ENCODE measurements at regions of chr1 and their contacts with region 1.

Region 1: DNA sequence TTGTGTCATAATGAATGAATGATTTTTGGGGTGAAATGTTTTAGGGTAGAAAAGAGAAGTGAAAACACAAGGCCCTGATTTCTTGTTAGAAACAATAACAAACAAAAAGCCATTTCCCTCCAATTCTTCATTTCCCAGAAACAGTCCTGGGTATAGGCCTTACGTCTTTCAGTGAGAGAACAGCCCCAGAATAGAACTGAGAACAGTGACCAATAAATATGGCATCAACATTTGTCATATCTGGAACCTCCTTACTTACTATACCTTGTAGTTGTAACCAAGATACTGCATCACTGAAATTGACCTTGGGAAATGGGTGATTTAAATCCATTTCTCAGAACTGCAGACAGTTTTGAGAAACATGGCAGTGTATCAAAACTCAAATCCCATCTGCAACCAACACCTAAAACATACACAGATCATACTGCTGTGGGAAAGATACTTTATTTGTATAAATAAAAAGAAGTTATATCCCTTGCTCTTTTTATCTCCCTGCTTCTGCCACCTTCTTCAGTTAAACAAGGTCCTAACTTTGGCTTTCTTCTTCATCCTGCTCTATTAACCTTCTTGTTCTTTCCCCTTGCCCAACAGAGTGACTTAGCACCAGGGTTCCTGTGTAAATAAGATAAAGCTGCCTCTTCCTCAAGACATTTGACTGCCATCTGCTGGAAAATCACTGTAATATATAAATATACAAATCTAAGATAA is 19.5 kb downstream of the XKR8 start:
- DNase-seq: peak in 7 of 9 donors; percentile 24 to 66 (median 53)
- ATAC-seq: peak; percentile 80
- H3K4me3 ChIP-seq: no peak overlapping the region
- H3K4me3 Mint-ChIP-seq: no peak overlapping the region
- H3K27ac ChIP-seq: no peak overlapping the region
- H3K27ac Mint-ChIP-seq: no peak overlapping the region
- H3K4me1 ChIP-seq: no peaks in the 10 kb centered on the region
- H3K4me1 Mint-ChIP-seq: peaks cover 0 to 3% (median 0%) of the 10 kb centered on the region in 7 donors
- H3K27me3 ChIP-seq: no peaks in the 10 kb centered on the region
- H3K27me3 Mint-ChIP-seq: no peaks in the 10 kb centered on the region

Region 2: GRCh38 chr1:27959400-27960217 is 19.7 kb before region 1 on chr1 and contains the start of gene XKR8:
- CTCF ChIA-PET with region 1: interaction called, 10 read pairs
- POLR2A ChIA-PET with region 1: interaction called, 7 read pairs
- intact Hi-C with region 1: loop called in 1 of 2 experiments (anchors 2 kb)
- DNase-seq: peak; percentile 76 to 87 (median 85)
- ATAC-seq: peak; percentile 99
- H3K4me3 ChIP-seq: peak within 1 kb of the TSS; percentile 79
- H3K4me3 Mint-ChIP-seq: peak within 1 kb of the TSS; percentile 85 to 91 (median 88)
- H3K27ac ChIP-seq: peak within 1 kb of the TSS; percentile 91
- H3K27ac Mint-ChIP-seq: peak within 1 kb of the TSS; percentile 79 to 94 (median 91)
- H3K4me1 ChIP-seq: peaks cover 19 to 24% of the 10 kb centered on the region in 2 donors
- H3K4me1 Mint-ChIP-seq: peaks cover 12 to 39% (median 28%) of the 10 kb centered on the region in 7 donors
- H3K27me3 ChIP-seq: no peaks in the 10 kb centered on the region
- H3K27me3 Mint-ChIP-seq: peaks cover 0 to 7% (median 0%) of the 10 kb centered on the region in 5 donors
- total RNA-seq, gene XKR8: 8.4 to 15.8 (median 10.7) TPM

Measured in naive thymus-derived CD4-positive, alpha-beta T cell (primary cell).